ENCODE measurements at regions of chr4 and their contacts with region 1.

Region 1: GRCh38 chr4:835148-836002 is 9.4 kb upstream of the CPLX1 start:
- DNase-seq: peak; percentile 35

Region 2: DNA sequence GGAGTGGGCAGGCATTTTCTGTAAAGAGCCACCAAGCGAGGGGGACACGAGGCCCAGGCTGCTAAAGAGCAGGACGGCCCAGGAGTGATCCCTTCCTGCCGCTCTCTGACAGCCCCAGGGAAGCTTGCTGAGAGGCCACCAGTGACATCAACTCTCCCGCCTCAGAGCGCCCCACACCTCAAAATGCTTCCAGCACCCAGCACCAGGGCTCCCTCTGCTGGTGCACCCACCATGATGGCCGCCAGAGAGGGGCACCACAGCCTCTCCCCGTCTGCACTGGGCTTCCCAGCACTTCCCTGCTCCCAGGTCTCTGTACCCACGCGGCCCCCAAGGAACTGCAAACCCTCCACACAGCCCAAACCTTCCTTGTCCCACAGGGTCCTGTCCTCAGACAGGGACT is 56.4 kb after region 1 on chr4:
- in situ Hi-C with region 1: loop called (anchors 10 kb)
- DNase-seq: no peak

Region 3: DNA sequence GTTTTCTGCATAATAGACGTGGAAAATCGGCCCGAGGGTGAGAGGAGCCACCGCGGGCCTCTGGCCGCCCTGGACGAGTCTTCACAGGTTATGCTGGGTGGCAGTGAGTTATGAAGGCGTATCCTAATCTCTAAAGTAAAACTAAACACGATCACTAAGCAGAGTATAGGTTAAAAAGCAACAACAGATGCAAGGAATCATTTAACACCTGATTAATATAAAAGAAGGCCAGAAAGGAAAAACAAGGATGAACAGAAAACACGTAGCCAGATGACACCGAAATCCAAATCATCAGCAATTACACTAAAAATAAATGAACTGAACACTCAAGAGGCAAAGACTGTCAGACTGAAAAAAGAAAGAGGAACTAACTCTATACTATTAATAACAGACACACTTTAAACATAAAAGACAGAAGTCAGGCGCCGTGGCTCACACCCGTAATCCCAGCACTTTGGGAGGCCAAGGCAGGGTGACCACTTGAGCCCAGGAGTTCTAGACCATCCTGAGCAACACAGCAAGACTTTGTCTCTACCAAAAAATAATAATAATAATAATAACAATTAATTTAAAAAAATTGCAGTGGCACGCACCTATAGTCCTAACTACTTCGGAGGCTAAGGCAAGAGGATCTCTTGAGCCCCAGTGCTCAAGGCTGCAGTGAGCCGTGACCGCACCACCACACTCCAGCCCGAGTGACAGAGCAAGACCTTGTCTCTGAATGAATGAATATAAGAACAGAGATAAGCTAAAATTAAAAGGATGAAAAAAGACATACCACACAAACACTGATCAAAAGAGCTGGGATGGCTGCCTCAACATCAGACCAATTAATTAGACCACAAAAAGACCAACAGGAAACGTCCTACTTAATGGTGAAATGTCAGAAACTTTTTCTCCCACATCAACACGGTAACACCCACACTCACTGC is 383.5 kb after region 1 on chr4:
- in situ Hi-C with region 1: no loop called
- DNase-seq: no peak

Measured in G401 (cell line).